GM12878 (cell line): ENCODE measurements at regions of chr2 and their contacts with region 1.

Region 1: GRCh38 chr2:42095923-42096408 is 48.1 kb downstream of the PKDCC start:
- DNase-seq: no peak
- ATAC-seq: peak; percentile 53
- H3K4me3 ChIP-seq: no peak overlapping the region
- H3K27ac ChIP-seq: no peak overlapping the region
- H3K4me1 ChIP-seq: peaks cover 41% of the 10 kb centered on the region
- H3K27me3 ChIP-seq: no peaks in the 10 kb centered on the region
- CTCF ChIP-seq: peak; percentile 67 to 87 (median 81); a peak in 5 of 6 replicates
- EP300 ChIP-seq: no peak
- POLR2A ChIP-seq: no peak
- RAD21 ChIP-seq: peak; percentile 96

Region 2: GRCh38 chr2:42048299-42049220 is 47.4 kb before region 1 on chr2:
- CTCF ChIA-PET with region 1: no interaction called
- POLR2A ChIA-PET with region 1: no interaction called
- RAD21 ChIA-PET with region 1: no interaction called
- SMC1A ChIA-PET with region 1: no interaction called
- in situ Hi-C with region 1: no loop called
- intact Hi-C with region 1: no loop called
- DNase-seq: no peak
- ATAC-seq: no peak
- H3K4me3 ChIP-seq: no peak overlapping the region
- H3K27ac ChIP-seq: no peak overlapping the region
- H3K4me1 ChIP-seq: no peaks in the 10 kb centered on the region
- H3K27me3 ChIP-seq: peaks cover 13 to 15% of the 10 kb centered on the region in 2 experiments
- CTCF ChIP-seq: no peak
- EP300 ChIP-seq: no peak
- POLR2A ChIP-seq: no peak
- RAD21 ChIP-seq: no peak

Region 3: GRCh38 chr2:42132966-42133641 is 37.1 kb after region 1 on chr2:
- CTCF ChIA-PET with region 1: interaction called, 23 read pairs
- POLR2A ChIA-PET with region 1: no interaction called
- RAD21 ChIA-PET with region 1: interaction called, 21 read pairs
- SMC1A ChIA-PET with region 1: interaction called, 87 read pairs
- in situ Hi-C with region 1: no loop called
- intact Hi-C with region 1: no loop called
- DNase-seq: peak; percentile 65
- ATAC-seq: peak; percentile 85
- H3K4me3 ChIP-seq: peak overlapping the region; percentile 18; the same call in 1 of the 2 replicates
- H3K27ac ChIP-seq: peak overlapping the region; percentile 9
- H3K4me1 ChIP-seq: peaks cover 50% of the 10 kb centered on the region
- H3K27me3 ChIP-seq: no peaks in the 10 kb centered on the region
- CTCF ChIP-seq: no peak
- EP300 ChIP-seq: no peak
- POLR2A ChIP-seq: peak; percentile 75
- RAD21 ChIP-seq: peak; percentile 11; the same call in 1 of the 2 replicates

Region 4: DNA sequence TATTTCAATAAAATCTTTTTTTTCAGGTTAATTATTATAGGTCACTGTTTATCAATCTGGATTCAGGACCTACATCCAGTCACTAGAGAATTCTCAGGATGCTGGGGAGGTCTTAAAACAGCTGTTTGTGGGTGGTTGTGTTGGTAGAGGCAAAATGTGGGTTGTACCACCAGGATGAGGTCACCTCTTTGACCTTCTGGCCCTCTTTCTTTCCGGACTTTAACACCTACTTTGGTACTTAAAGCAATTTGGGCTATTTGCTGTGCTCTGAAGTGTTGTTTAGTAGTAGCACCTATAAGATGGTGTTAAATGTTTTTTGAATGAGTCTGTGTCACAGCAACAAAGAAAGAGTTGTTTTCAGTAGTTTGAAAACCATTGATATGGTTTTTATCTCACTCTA is 87.8 kb after region 1 on chr2:
- CTCF ChIA-PET with region 1: interaction called, 16 read pairs
- POLR2A ChIA-PET with region 1: no interaction called
- RAD21 ChIA-PET with region 1: interaction called, 8 read pairs
- SMC1A ChIA-PET with region 1: interaction called, 6 read pairs
- in situ Hi-C with region 1: no loop called
- intact Hi-C with region 1: no loop called
- DNase-seq: no peak
- ATAC-seq: peak; percentile 75
- H3K4me3 ChIP-seq: no peak overlapping the region
- H3K27ac ChIP-seq: 0 out of 2 replicates have a peak overlapping the region, but pooled peaks have one; percentile 35
- H3K4me1 ChIP-seq: peaks cover 3% of the 10 kb centered on the region; the same call in 1 of the 2 replicates
- H3K27me3 ChIP-seq: no peaks in the 10 kb centered on the region
- CTCF ChIP-seq: no peak
- EP300 ChIP-seq: no peak
- POLR2A ChIP-seq: no peak
- RAD21 ChIP-seq: no peak

Region 5: DNA sequence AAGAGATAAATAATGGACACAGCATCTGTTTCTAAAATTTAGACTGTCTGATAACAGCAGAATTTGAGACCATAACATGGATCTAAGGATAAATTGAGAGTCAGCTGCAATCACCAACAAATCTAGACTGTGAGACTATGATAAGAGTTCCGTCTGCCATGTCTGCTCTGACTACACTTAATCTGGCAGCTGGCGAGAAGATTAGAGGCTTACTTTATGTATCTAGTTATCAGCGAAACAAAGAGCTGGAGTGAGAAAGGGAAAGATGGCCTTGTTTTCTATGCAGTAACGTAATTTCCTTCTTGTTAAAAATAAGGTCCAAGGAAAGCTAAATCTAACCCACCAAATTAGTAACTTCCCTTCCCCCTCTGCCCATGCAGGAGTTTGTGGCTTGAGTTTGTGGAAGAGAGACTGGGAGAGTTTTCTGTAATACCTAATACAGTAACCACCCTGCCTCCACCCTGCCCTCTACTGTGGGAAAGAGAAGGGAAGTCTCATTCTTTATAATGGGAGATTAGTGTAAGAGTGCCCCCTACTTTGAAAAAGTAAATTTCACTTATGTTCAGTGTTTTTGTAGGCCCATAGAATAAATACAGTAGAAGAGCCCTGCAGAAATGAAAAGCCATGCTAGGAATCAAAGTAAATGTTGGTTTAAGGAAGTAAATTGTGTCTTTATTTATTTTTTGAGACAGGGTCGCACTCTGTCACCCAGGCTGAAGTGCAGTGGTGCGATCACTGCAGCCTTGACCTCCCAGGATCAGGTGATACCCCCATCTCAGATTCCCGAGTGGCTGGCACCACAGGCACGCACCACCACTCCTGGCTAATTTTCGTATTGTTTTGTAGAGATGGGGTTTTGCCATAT is 100.7 kb after region 1 on chr2:
- CTCF ChIA-PET with region 1: interaction called, 160 read pairs
- POLR2A ChIA-PET with region 1: interaction called, 6 read pairs
- RAD21 ChIA-PET with region 1: interaction called, 64 read pairs
- SMC1A ChIA-PET with region 1: interaction called, 95 read pairs
- in situ Hi-C with region 1: loop called (anchors 5 kb)
- intact Hi-C with region 1: loop called (anchors 1 kb)
- DNase-seq: peak; percentile 11
- ATAC-seq: peak; percentile 78
- H3K4me3 ChIP-seq: no peak overlapping the region
- H3K27ac ChIP-seq: no peak overlapping the region
- H3K4me1 ChIP-seq: peaks cover 19% of the 10 kb centered on the region; the same call in 1 of the 2 replicates
- H3K27me3 ChIP-seq: no peaks in the 10 kb centered on the region
- CTCF ChIP-seq: peak; percentile 48 to 76 (median 52); a peak in 5 of 6 replicates
- EP300 ChIP-seq: no peak
- POLR2A ChIP-seq: no peak
- RAD21 ChIP-seq: peak; percentile 68

Region 6: DNA sequence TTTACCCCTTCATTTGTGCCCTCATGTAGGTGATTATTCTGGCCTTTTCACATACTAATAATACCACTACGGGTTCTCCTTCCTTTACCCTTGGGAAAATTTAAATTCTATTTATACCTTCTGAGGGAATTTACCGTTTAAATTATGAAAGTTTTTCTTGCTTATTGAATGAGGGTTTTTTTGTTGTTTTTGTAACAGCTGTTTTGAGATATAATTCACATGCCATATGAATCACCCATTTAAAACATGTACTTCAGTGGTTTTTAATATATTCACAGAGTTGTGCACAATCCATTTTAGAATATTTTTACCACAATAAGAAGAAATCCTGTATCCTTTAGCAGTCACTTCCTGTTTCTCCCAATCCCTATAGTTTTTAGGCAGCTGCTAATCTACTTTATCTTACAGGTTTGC is 127.9 kb after region 1 on chr2:
- CTCF ChIA-PET with region 1: interaction called, 10 read pairs
- POLR2A ChIA-PET with region 1: no interaction called
- RAD21 ChIA-PET with region 1: interaction called, 3 read pairs
- SMC1A ChIA-PET with region 1: interaction called, 19 read pairs
- in situ Hi-C with region 1: no loop called
- intact Hi-C with region 1: no loop called
- DNase-seq: no peak
- ATAC-seq: peak; percentile 50
- H3K4me3 ChIP-seq: no peak overlapping the region
- H3K27ac ChIP-seq: peak overlapping the region; percentile 38
- H3K4me1 ChIP-seq: 0 out of 2 replicates have a peak, but pooled peaks cover 5% of the 10 kb centered on the region
- H3K27me3 ChIP-seq: no peaks in the 10 kb centered on the region
- CTCF ChIP-seq: no peak
- EP300 ChIP-seq: no peak
- POLR2A ChIP-seq: no peak
- RAD21 ChIP-seq: no peak

Region 7: GRCh38 chr2:42238644-42239288 is 142.8 kb after region 1 on chr2:
- CTCF ChIA-PET with region 1: interaction called, 186 read pairs
- POLR2A ChIA-PET with region 1: interaction called, 9 read pairs
- RAD21 ChIA-PET with region 1: interaction called, 55 read pairs
- SMC1A ChIA-PET with region 1: interaction called, 41 read pairs
- in situ Hi-C with region 1: loop called (anchors 10 kb)
- intact Hi-C with region 1: loop called (anchors 1 kb)
- DNase-seq: no peak
- ATAC-seq: peak; percentile 94
- H3K4me3 ChIP-seq: no peak overlapping the region
- H3K27ac ChIP-seq: no peak overlapping the region
- H3K4me1 ChIP-seq: no peaks in the 10 kb centered on the region
- H3K27me3 ChIP-seq: no peaks in the 10 kb centered on the region
- CTCF ChIP-seq: peak; percentile 22 to 55 (median 29); a peak in 4 of 6 replicates
- EP300 ChIP-seq: no peak
- POLR2A ChIP-seq: no peak
- RAD21 ChIP-seq: peak; percentile 84

Region 8: DNA sequence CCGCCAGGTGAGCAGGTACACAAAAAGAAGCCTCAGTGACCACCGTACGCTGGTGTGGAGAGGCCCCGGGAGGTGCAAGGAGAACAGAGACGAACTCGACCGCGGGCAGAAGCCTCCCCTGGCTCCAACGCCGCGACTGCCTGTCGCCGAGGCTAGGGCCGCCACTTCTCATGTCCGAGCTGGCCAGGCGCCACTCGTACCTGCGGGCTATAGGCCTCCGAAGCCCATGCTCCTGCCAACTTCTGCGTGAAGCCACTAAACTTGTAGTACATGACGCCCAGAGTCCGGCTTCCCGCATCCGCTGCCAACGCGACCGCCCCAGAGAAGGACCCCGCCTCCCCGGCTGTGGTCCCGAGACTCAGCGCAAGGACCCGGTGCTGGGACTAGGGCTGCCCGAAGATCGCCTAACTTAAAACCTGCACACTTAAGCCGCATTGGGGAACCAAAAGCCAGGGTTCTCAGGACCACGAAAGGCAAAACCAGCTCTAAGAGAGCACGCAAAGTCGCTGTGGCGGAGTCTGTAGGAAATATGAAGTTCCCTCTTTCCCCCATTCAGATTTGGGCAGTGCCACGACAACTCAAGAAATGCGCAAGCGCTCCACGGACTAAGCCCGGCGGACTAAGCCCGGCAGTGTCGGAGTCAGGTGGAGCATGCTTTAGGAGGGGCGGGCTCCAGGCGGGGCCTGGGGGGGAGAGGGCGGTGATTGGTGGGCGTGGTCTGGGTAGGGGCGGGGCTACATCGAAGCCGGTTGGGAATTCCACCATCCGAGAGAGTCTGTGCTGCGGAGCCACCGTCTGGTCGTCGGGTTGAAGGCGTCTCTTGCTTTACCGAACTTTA is 265.1 kb after region 1 on chr2 and contains the start of gene COX7A2L:
- CTCF ChIA-PET with region 1: interaction called, 7 read pairs
- POLR2A ChIA-PET with region 1: no interaction called
- RAD21 ChIA-PET with region 1: interaction called, 4 read pairs
- SMC1A ChIA-PET with region 1: interaction called, 5 read pairs
- in situ Hi-C with region 1: no loop called
- intact Hi-C with region 1: loop called (anchors 2 kb)
- DNase-seq: peak; percentile 86
- ATAC-seq: peak; percentile 95
- H3K4me3 ChIP-seq: peak within 1 kb of the TSS; percentile 97
- H3K27ac ChIP-seq: peak within 1 kb of the TSS; percentile 97
- H3K4me1 ChIP-seq: peaks cover 10% of the 10 kb centered on the region
- H3K27me3 ChIP-seq: no peaks in the 10 kb centered on the region
- CTCF ChIP-seq: peak in 2 of 3 experiments; percentile 31 to 70; a peak in 3 of 6 replicates
- EP300 ChIP-seq: 0 out of 4 replicates have a peak, but pooled peaks of 1 of the 2 experiments have one; percentile 31
- POLR2A ChIP-seq: peak; percentile 89
- RAD21 ChIP-seq: peak; percentile 33; the same call in 1 of the 2 replicates
- polyA plus RNA-seq, gene COX7A2L: 432 to 532 TPM